Adrenal gland (tissue), 19 donors: ENCODE measurements at regions of chr7 and their contacts with region 1.

Region 1: DNA sequence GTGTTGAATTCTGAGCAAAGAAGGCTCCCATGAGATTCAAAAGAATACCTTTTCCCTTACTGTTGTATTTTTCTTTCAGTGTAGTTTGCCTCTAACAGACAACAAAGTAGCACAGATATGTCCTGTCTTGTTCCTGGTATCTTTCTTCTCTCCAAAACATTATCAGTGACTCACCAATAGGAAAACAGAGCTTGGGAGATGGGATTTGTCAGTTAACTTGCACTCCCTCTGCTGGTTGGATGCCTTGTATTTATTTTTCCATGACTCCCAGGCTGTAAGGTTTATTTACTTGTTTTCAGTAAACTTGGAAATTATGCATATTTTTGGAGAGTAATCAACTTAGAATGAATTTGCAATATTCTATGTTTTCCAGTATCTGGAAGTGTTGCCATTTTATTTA is 129.7 kb downstream of the SAMD9 start:
- DNase-seq: peak in 6 of 7 donors; percentile 16 to 51 (median 36)
- H3K4me3 ChIP-seq: no peak overlapping the region
- H3K27ac ChIP-seq: no peak overlapping the region
- H3K4me1 ChIP-seq: no peaks in the 10 kb centered on the region
- H3K27me3 ChIP-seq: no peaks in the 10 kb centered on the region
- CTCF ChIP-seq: peak; percentile 43 to 67 (median 58)
- POLR2A ChIP-seq: no peak

Region 2: GRCh38 chr7:92843034-92843760 is 144.9 kb before region 1 on chr7:
- intact Hi-C with region 1: loop called (anchors 5 to 10 kb)
- DNase-seq: no peak
- H3K4me3 ChIP-seq: no peak overlapping the region
- H3K27ac ChIP-seq: no peak overlapping the region
- H3K4me1 ChIP-seq: no peaks in the 10 kb centered on the region
- H3K27me3 ChIP-seq: no peaks in the 10 kb centered on the region
- CTCF ChIP-seq: no peak
- POLR2A ChIP-seq: no peak

Region 3: GRCh38 chr7:93006480-93007095 is 18.5 kb after region 1 on chr7:
- intact Hi-C with region 1: no loop called
- DNase-seq: no peak
- H3K4me3 ChIP-seq: no peak overlapping the region
- H3K27ac ChIP-seq: no peak overlapping the region
- H3K4me1 ChIP-seq: no peaks in the 10 kb centered on the region
- H3K27me3 ChIP-seq: no peaks in the 10 kb centered on the region
- CTCF ChIP-seq: no peak
- POLR2A ChIP-seq: no peak

Region 4: GRCh38 chr7:93601363-93601762 is 613.3 kb after region 1 on chr7:
- intact Hi-C with region 1: no loop called
- DNase-seq: peak in 1 of 7 donors; percentile 1
- H3K4me3 ChIP-seq: no peak overlapping the region
- H3K27ac ChIP-seq: no peak overlapping the region
- H3K4me1 ChIP-seq: no peaks in the 10 kb centered on the region
- H3K27me3 ChIP-seq: no peaks in the 10 kb centered on the region
- CTCF ChIP-seq: no peak
- POLR2A ChIP-seq: no peak